Left cardiac atrium (tissue), 4 donors: ENCODE measurements at regions of chr5 and their contacts with region 1.

Region 1: DNA sequence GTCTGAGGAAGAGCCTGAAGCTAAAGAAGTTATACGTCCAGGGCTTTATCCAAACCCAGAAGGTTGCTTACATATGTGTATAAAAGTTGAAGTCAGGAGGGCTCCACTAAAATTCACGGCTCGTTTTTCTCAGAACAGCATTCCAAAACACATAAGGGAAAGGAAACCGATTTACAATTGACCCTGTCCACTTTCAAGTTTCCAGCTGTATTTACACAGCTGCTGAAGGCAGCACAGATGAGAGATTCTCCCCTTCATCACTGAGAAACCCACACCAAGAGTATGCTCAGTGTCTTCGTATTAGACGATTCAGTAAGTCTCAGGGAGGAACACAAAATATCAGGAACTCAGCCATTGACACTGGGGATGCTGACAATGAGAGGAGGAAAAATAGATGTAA is 5.9 kb upstream of the NREP start:
- DNase-seq: no peak
- ATAC-seq: no peak

Region 2: DNA sequence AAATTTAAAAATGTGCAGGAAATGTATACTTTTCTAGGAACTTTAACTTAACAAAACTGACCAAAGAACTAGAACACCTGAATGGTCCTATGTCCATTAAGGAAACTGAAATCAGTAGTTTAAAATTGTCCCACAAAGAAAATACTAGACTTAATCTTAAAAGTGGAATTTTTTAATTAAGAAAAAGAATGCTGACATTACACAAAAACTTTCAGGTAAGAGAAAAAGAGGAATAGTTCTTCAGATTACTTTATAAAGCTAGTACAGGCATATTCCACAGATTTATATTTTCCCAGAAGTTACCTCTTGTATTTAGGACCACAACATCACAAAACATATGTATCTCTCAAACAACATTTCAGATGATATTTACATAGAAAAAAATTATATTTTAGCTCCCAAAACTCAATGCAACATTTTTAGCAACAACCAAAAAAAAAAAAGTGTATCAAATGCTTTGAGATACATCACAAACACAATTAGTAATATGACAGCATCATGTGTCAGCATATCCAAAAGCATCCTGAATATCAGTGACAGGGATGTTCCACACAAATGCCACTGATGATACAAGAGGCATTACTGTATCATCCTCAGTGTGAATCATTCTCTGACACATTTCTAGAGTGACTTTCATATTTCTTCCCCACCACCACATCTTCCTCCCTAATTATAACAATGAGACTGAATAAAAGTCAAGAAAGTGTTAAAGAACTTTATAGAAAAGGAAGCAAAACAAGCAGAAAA is 392.2 kb after region 1 on chr5:
- intact Hi-C with region 1: loop called in 1 of 2 experiments (anchors 5 kb)
- DNase-seq: no peak
- ATAC-seq: peak in 1 of 2 donors; percentile 43